AG04450 (cell line): ENCODE measurements at regions of chrX and their contacts with region 1.

Region 1: GRCh38 chrX:84046403-84046984 is 141.5 kb downstream of the RPS6KA6 start:
- DNase-seq: no peak
- H3K4me3 ChIP-seq: no peak overlapping the region
- H3K27ac ChIP-seq: no peak overlapping the region
- H3K27me3 ChIP-seq: no peaks in the 10 kb centered on the region
- CTCF ChIP-seq: peak; percentile 69

Region 2: DNA sequence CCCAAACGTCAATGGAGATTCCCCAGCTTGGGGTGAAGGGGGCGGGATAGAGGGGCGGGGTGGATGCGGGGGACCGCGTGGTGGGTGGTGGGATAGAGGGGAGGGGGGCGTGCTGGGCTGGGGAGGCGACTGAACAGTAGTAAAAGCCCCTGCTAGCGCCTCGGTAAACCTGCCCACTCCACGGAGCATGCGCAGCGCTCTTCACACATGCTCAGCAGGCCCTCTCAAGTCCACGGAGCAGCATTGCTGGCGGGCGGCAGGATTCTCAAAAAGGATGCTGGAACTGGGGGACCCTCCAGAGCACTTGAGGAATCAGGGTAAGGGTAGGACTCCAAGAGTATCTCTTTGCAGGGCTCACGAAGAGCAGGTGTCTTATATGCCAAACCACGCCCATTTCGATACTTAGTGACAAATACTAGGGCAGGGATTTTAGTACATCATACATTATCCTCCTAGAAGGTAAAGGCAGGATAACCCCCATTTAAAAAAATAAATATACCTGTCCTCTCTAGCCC is 141.9 kb after region 1 on chrX:
- CTCF ChIA-PET with region 1: interaction called, 13 read pairs
- POLR2A ChIA-PET with region 1: no interaction called
- DNase-seq: peak; percentile 26
- H3K4me3 ChIP-seq: peak overlapping the region; percentile 64
- H3K27ac ChIP-seq: no peak overlapping the region
- H3K27me3 ChIP-seq: no peaks in the 10 kb centered on the region
- CTCF ChIP-seq: peak; percentile 15; the same call in 1 of the 2 replicates

Region 3: DNA sequence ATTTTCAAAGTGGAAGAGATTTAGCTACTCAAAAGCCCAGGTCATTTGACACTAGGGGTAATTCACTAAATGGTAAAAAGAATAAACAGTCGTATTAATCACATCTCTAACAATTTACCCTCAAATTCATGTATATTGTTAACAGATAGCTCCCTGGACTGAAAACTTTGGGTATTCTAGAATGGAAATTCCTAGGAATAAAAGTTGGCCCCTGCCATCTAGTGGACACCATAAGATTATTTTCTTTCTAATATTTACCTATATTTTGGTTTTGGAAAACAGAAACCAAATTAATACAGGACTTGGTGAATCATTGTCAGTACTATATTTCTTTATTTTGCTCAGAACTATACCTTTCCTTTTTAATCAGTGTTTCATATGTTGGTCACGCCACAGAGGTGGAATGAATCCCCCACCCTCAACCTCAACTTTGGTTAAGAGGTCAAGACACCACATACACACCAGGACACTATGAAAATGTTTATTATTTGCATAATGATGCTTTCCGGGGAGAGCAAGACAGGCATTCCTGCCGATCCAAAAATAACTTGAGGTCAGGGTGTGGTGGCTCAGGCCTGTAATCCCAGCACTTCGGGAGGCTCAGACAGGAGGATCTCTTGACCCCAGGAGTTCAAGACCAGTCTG is 861.0 kb after region 1 on chrX:
- CTCF ChIA-PET with region 1: interaction called, 11 read pairs
- POLR2A ChIA-PET with region 1: no interaction called
- DNase-seq: no peak
- H3K4me3 ChIP-seq: no peak overlapping the region
- H3K27ac ChIP-seq: no peak overlapping the region
- H3K27me3 ChIP-seq: no peaks in the 10 kb centered on the region
- CTCF ChIP-seq: peak; percentile 34